CD4-positive, alpha-beta memory T cell (primary cell): ENCODE measurements at regions of chr9 and their contacts with region 1.

Region 1: DNA sequence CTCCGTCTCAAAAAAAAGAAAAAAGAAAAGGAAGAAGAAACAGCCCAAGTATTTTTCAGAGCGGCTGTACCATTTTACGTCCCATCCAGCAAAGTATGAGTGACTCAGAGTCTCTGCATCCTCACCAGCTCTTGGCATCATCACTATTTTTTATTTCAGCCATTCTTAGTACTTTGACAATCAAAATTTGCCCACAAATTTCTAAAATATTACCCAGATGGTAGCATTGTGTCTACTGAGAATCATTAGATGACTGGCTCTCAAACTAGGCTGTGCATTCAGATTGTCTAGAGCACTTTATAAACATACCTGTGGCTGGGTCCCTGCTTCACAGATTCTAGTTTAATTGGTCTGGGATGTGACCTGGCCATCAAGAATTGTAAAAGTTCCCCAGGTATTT is 21.6 kb upstream of the MELK start:
- DNase-seq: no peak
- H3K4me3 ChIP-seq: no peak overlapping the region
- H3K4me3 Mint-ChIP-seq: no peak overlapping the region
- H3K27ac ChIP-seq: no peak overlapping the region
- H3K27ac Mint-ChIP-seq: no peak overlapping the region
- H3K4me1 ChIP-seq: no peaks in the 10 kb centered on the region
- H3K4me1 Mint-ChIP-seq: peaks cover 0 to 3% (median 1%) of the 10 kb centered on the region in 4 donors
- H3K27me3 ChIP-seq: no peaks in the 10 kb centered on the region
- H3K27me3 Mint-ChIP-seq: peaks cover 2 to 4% of the 10 kb centered on the region in 2 donors

Region 2: GRCh38 chr9:36492865-36493264 is 58.3 kb before region 1 on chr9:
- CTCF ChIA-PET with region 1: interaction called, 11 read pairs
- POLR2A ChIA-PET with region 1: no interaction called
- intact Hi-C with region 1: loop called (anchors 2 kb)
- DNase-seq: peak; percentile 53 to 66 (median 53)
- H3K4me3 ChIP-seq: peak overlapping the region in 1 of 2 donors; percentile 13
- H3K4me3 Mint-ChIP-seq: peak overlapping the region; percentile 75 to 87 (median 82)
- H3K27ac ChIP-seq: no peak overlapping the region
- H3K27ac Mint-ChIP-seq: peak overlapping the region; percentile 44 to 97 (median 88)
- H3K4me1 ChIP-seq: peaks cover 46% of the 10 kb centered on the region
- H3K4me1 Mint-ChIP-seq: peaks cover 39 to 69% (median 56%) of the 10 kb centered on the region in 4 donors
- H3K27me3 ChIP-seq: no peaks in the 10 kb centered on the region
- H3K27me3 Mint-ChIP-seq: no peaks in the 10 kb centered on the region

Region 3: DNA sequence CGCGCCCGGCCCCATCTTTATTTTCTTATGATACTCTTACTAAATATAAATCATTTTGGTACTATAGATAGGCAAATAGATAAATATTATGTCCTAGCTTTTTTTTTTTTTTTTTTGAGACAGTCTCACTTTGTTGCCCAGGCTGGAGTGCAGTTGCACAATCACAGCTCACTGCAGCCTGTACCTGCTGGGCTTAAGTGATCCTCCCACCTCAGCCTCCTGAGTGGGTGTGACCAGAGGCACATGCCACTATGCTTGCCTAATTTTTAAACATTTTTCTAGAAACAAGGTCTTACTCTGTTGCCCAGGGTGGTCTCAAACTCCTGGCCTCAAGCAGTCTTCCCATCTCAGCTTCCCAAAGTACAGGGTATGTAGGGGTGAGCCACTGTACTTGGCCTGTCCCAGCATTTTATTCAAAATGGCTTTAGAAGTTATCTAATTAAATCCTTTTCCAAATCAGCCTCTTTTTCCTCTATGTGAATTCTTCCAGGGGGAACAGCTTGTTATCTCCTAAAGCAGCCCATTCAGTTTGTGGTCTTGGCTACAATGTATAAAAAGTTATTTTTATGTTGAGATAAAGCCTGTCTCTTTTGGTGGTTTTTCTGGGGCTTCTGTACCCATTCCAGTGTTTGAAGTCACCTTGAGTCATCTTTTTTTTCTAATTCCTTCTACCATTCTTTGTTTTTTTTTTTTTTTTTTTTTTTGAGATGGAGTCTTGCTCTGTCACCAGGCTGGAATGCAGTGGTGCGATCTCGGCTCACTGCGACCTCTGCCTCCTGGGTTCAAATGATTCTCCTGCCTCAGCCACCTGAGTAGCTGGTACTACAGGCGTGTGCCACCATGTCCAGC is 33.7 kb after region 1 on chr9:
- CTCF ChIA-PET with region 1: no interaction called
- POLR2A ChIA-PET with region 1: no interaction called
- intact Hi-C with region 1: no loop called
- DNase-seq: no peak
- H3K4me3 ChIP-seq: no peak overlapping the region
- H3K4me3 Mint-ChIP-seq: no peak overlapping the region
- H3K27ac ChIP-seq: no peak overlapping the region
- H3K27ac Mint-ChIP-seq: peak overlapping the region in 1 of 7 donors; percentile 60
- H3K4me1 ChIP-seq: no peaks in the 10 kb centered on the region
- H3K4me1 Mint-ChIP-seq: peaks cover 0 to 3% (median 0%) of the 10 kb centered on the region in 4 donors
- H3K27me3 ChIP-seq: no peaks in the 10 kb centered on the region
- H3K27me3 Mint-ChIP-seq: no peaks in the 10 kb centered on the region